ENCODE measurements at regions of chr6 and their contacts with region 1.

Region 1: GRCh38 chr6:149925974-149926777 is 3.3 kb upstream of the RAET1G start:
- DNase-seq: peak; percentile 67 to 82 (median 80)
- H3K4me3 ChIP-seq: peak overlapping the region in 6 of 7 experiments; percentile 5 to 73 (median 57)
- H3K27ac ChIP-seq: no peak overlapping the region
- H3K4me1 ChIP-seq: peaks cover 0 to 26% (median 24%) of the 10 kb centered on the region in 4 experiments
- H3K27me3 ChIP-seq: peaks cover 10 to 85% (median 51%) of the 10 kb centered on the region in 5 experiments

Region 2: DNA sequence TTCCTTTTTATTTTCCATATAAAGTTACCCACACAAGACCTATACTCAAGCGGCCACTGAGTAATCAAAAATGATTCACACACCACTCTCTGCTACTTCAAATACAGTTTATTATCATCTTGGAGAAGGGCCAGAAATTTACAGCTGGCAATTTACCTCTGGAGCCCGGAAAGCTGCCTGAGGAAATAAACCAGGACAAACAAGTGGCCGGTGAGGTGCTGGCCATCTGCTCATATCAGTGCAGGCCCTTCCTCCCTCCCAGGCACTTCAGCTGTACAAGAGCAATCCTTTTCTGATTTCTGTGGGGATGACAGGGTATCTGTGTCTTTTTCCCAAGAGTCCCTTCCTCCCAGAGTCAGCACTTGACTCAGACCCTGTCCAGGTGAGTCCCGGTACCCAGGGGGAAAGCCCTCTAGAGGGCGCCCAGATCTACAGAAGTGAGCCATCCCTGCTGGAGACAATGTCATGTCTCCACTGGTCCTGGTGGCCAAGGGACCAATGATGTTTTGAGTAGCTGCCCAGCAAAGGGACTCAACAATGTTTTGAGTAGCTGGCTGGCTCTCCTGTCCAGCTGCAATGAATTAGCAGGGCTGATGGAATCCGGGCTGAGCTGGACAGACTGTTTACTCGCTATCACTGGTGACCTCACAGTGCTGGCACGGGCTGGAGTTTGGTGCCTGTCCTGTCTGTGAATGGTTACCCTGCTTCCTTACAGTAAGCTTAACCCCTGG is 85.7 kb before region 1 on chr6:
- CTCF ChIA-PET with region 1: interaction called, 21 read pairs
- POLR2A ChIA-PET with region 1: no interaction called
- DNase-seq: peak in 2 of 3 donors; percentile 24 to 38
- H3K4me3 ChIP-seq: no peak overlapping the region
- H3K27ac ChIP-seq: no peak overlapping the region
- H3K4me1 ChIP-seq: no peaks in the 10 kb centered on the region
- H3K27me3 ChIP-seq: peaks cover 0 to 6% (median under 1%) of the 10 kb centered on the region in 5 experiments

Region 3: DNA sequence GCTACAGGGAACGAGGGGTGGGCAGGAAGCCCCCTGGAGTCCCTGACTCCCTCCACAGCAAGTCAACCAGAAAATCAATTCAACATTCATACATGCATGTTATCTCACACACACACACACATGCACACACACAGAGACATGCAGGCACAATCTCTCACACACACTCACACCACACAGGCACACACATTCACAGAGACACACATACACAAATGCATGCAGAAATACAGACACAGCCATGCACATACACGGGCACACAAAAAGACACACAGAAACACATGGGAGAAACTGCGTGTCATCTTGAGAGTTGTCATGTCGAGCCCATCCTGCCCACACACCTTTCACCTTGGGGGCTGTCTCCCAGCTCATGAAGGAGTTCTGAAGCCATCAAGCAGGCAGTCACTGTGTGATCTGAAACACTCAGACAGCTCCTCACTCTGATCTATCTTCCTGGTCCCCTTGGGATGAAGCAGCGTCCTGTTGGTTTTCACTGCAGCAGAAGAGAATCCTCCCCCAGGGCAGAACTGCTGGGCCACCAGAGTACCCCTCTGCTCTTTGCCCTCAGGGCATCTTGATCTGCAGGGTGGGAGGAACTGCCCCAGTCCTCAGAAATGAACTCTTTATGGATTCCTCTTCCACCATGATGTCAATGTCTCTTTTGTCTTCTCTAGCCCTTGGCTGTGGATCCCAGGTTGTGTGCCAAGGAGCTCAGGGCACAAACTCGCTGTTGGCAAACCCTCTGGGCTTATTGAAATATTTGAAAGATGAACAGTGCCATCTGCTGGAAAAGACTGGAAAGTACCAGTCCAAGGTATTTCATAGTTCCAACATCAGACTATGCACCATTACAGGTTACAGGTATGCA is 90.4 kb after region 1 on chr6:
- CTCF ChIA-PET with region 1: interaction called, 10 read pairs
- POLR2A ChIA-PET with region 1: no interaction called
- DNase-seq: peak; percentile 65 to 82 (median 72)
- H3K4me3 ChIP-seq: no peak overlapping the region
- H3K27ac ChIP-seq: no peak overlapping the region
- H3K4me1 ChIP-seq: no peaks in the 10 kb centered on the region
- H3K27me3 ChIP-seq: peaks cover 11 to 65% (median 39%) of the 10 kb centered on the region in 5 experiments

Measured in common myeloid progenitor, CD34-positive (primary cell).